B cell (primary cell): ENCODE measurements at regions of chr19 and their contacts with region 1.

Region 1: GRCh38 chr19:40465557-40466150 is at the start of gene BLVRB:
- DNase-seq: peak; percentile 100
- ATAC-seq: peak; percentile 89
- H3K4me3 ChIP-seq: peak within 1 kb of the TSS; percentile 1 to 70 (median 62)
- H3K4me3 Mint-ChIP-seq: peak within 1 kb of the TSS; percentile 87
- H3K27ac ChIP-seq: peak within 1 kb of the TSS; percentile 38 to 60
- H3K27ac Mint-ChIP-seq: peak within 1 kb of the TSS; percentile 66
- H3K4me1 ChIP-seq: peaks cover 30 to 44% of the 10 kb centered on the region in 2 donors
- H3K4me1 Mint-ChIP-seq: peaks cover 44% of the 10 kb centered on the region
- H3K27me3 ChIP-seq: peaks cover 0 to 23% (median 3%) of the 10 kb centered on the region in 4 experiments
- H3K27me3 Mint-ChIP-seq: peaks cover 12% of the 10 kb centered on the region
- CTCF ChIP-seq: no peak
- total RNA-seq, gene BLVRB: 11.8 and 14.2 TPM in 2 replicates

Region 2: GRCh38 chr19:40285353-40286234 is 180.1 kb before region 1 on chr19:
- CTCF ChIA-PET with region 1: no interaction called
- POLR2A ChIA-PET with region 1: interaction called, 4 read pairs
- intact Hi-C with region 1: loop called (anchors 5 kb)
- DNase-seq: peak; percentile 100
- ATAC-seq: peak; percentile 74
- H3K4me3 ChIP-seq: peak overlapping the region in 4 of 5 experiments; percentile 68 to 89 (median 78)
- H3K4me3 Mint-ChIP-seq: peak overlapping the region; percentile 87
- H3K27ac ChIP-seq: peak overlapping the region; percentile 99 to 100
- H3K27ac Mint-ChIP-seq: peak overlapping the region; percentile 97
- H3K4me1 ChIP-seq: peaks cover 40 to 54% of the 10 kb centered on the region in 2 donors
- H3K4me1 Mint-ChIP-seq: peaks cover 53% of the 10 kb centered on the region
- H3K27me3 ChIP-seq: no peaks in the 10 kb centered on the region
- H3K27me3 Mint-ChIP-seq: no peaks in the 10 kb centered on the region
- CTCF ChIP-seq: no peak

Region 3: GRCh38 chr19:40348125-40348913 is 117.3 kb before region 1 on chr19 and contains the starts of genes C19orf47 and PLD3:
- CTCF ChIA-PET with region 1: no interaction called
- POLR2A ChIA-PET with region 1: no interaction called
- intact Hi-C with region 1: loop called (anchors 1 kb)
- DNase-seq: peak; percentile 99
- ATAC-seq: peak; percentile 94
- H3K4me3 ChIP-seq: peak within 1 kb of the TSS; percentile 59 to 90 (median 86)
- H3K4me3 Mint-ChIP-seq: peak within 1 kb of the TSS; percentile 91
- H3K27ac ChIP-seq: peak within 1 kb of the TSS; percentile 40 to 83
- H3K27ac Mint-ChIP-seq: peak within 1 kb of the TSS; percentile 97
- H3K4me1 ChIP-seq: peaks cover 12 to 17% of the 10 kb centered on the region in 2 donors
- H3K4me1 Mint-ChIP-seq: peaks cover 27% of the 10 kb centered on the region
- H3K27me3 ChIP-seq: no peaks in the 10 kb centered on the region
- H3K27me3 Mint-ChIP-seq: no peaks in the 10 kb centered on the region
- CTCF ChIP-seq: no peak
- total RNA-seq, gene C19orf47: 14.3 and 16.7 TPM in 2 replicates
- total RNA-seq, gene PLD3: 61.7 and 69.0 TPM in 2 replicates

Region 4: GRCh38 chr19:40529093-40529954 is 63.7 kb after region 1 on chr19:
- CTCF ChIA-PET with region 1: no interaction called
- POLR2A ChIA-PET with region 1: no interaction called
- intact Hi-C with region 1: loop called (anchors 1 kb)
- DNase-seq: peak; percentile 95
- ATAC-seq: peak; percentile 91
- H3K4me3 ChIP-seq: peak overlapping the region; percentile 9 to 69 (median 41)
- H3K4me3 Mint-ChIP-seq: peak overlapping the region; percentile 82
- H3K27ac ChIP-seq: no peak overlapping the region
- H3K27ac Mint-ChIP-seq: peak overlapping the region; percentile 64
- H3K4me1 ChIP-seq: peaks cover 13 to 14% of the 10 kb centered on the region in 2 donors
- H3K4me1 Mint-ChIP-seq: peaks cover 13% of the 10 kb centered on the region
- H3K27me3 ChIP-seq: peaks cover 0 to 35% (median 18%) of the 10 kb centered on the region in 4 experiments
- H3K27me3 Mint-ChIP-seq: peaks cover 44% of the 10 kb centered on the region
- CTCF ChIP-seq: peak; percentile 91